Calu3 (cell line): ENCODE measurements at regions of chr5 and their contacts with region 1.

Region 1: DNA sequence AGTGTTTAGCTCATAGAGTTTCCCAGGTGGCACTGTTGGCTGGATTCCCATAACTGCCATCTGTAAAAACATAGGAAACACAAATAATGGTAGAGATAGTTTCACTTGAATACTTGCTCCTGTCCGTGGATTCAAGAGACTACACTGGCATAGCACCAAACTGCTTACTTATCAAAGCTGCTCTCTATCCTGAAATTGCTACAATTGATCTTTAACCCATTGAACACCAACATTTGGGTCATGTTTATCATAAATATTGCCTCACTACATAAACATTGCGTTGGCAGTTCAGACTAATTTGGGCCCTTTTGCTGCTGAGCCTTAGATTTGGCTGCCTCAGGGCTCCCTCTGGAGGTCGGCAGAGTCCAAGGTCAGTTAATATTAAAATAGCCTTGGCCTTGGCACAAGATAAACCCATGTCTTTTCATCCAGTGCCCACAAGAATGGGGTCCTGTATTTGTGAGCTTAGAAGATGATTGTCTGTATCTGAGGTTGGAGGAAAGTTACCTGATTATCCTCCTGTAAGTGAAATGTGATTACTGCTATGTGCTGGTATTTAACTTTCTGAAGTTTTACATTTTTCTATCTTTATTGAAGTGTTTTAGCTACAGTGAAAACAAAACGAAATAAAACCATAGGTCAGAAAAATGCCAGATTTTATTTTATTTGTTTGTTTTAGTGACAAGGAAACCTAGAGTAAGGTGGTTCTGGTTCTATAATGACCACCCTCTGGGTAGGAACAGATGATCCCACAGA is 4.0 kb upstream of the RANBP3L start:
- DNase-seq: peak; percentile 41
- H3K4me3 Mint-ChIP-seq: no peak overlapping the region
- H3K27ac Mint-ChIP-seq: no peak overlapping the region
- H3K4me1 Mint-ChIP-seq: peaks cover 6% of the 10 kb centered on the region
- H3K27me3 Mint-ChIP-seq: peaks cover 28% of the 10 kb centered on the region
- CTCF ChIP-seq: peak; percentile 54

Region 2: GRCh38 chr5:35963381-35963843 is 342.3 kb before region 1 on chr5:
- CTCF ChIA-PET with region 1: no interaction called
- intact Hi-C with region 1: loop called (anchors 5 kb)
- DNase-seq: peak; percentile 25
- H3K4me3 Mint-ChIP-seq: no peak overlapping the region
- H3K27ac Mint-ChIP-seq: no peak overlapping the region
- H3K4me1 Mint-ChIP-seq: no peaks in the 10 kb centered on the region
- H3K27me3 Mint-ChIP-seq: no peaks in the 10 kb centered on the region
- CTCF ChIP-seq: peak; percentile 20

Region 3: GRCh38 chr5:36177715-36178523 is 127.8 kb before region 1 on chr5:
- CTCF ChIA-PET with region 1: no interaction called
- intact Hi-C with region 1: loop called (anchors 1 kb)
- DNase-seq: no peak
- H3K4me3 Mint-ChIP-seq: no peak overlapping the region
- H3K27ac Mint-ChIP-seq: no peak overlapping the region
- H3K4me1 Mint-ChIP-seq: no peaks in the 10 kb centered on the region
- H3K27me3 Mint-ChIP-seq: no peaks in the 10 kb centered on the region
- CTCF ChIP-seq: peak; percentile 18

Region 4: GRCh38 chr5:36264202-36264760 is 41.5 kb before region 1 on chr5:
- CTCF ChIA-PET with region 1: interaction called, 3 read pairs
- intact Hi-C with region 1: loop called (anchors 2 kb)
- DNase-seq: no peak
- H3K4me3 Mint-ChIP-seq: no peak overlapping the region
- H3K27ac Mint-ChIP-seq: no peak overlapping the region
- H3K4me1 Mint-ChIP-seq: no peaks in the 10 kb centered on the region
- H3K27me3 Mint-ChIP-seq: no peaks in the 10 kb centered on the region
- CTCF ChIP-seq: no peak

Region 5: GRCh38 chr5:36325196-36325595 is 19.4 kb after region 1 on chr5:
- CTCF ChIA-PET with region 1: no interaction called
- intact Hi-C with region 1: loop called (anchors 1 kb)
- DNase-seq: no peak
- H3K4me3 Mint-ChIP-seq: no peak overlapping the region
- H3K27ac Mint-ChIP-seq: no peak overlapping the region
- H3K4me1 Mint-ChIP-seq: no peaks in the 10 kb centered on the region
- H3K27me3 Mint-ChIP-seq: peaks cover 22% of the 10 kb centered on the region
- CTCF ChIP-seq: no peak

Region 6: GRCh38 chr5:36492998-36493655 is 187.4 kb after region 1 on chr5:
- CTCF ChIA-PET with region 1: no interaction called
- intact Hi-C with region 1: no loop called
- DNase-seq: peak; percentile 45
- H3K4me3 Mint-ChIP-seq: no peak overlapping the region
- H3K27ac Mint-ChIP-seq: peak overlapping the region; percentile 15
- H3K4me1 Mint-ChIP-seq: peaks cover 25% of the 10 kb centered on the region
- H3K27me3 Mint-ChIP-seq: peaks cover 29% of the 10 kb centered on the region
- CTCF ChIP-seq: no peak